Ovary (tissue), 10 donors: ENCODE measurements at regions of chr11 and their contacts with region 1.

Region 1: DNA sequence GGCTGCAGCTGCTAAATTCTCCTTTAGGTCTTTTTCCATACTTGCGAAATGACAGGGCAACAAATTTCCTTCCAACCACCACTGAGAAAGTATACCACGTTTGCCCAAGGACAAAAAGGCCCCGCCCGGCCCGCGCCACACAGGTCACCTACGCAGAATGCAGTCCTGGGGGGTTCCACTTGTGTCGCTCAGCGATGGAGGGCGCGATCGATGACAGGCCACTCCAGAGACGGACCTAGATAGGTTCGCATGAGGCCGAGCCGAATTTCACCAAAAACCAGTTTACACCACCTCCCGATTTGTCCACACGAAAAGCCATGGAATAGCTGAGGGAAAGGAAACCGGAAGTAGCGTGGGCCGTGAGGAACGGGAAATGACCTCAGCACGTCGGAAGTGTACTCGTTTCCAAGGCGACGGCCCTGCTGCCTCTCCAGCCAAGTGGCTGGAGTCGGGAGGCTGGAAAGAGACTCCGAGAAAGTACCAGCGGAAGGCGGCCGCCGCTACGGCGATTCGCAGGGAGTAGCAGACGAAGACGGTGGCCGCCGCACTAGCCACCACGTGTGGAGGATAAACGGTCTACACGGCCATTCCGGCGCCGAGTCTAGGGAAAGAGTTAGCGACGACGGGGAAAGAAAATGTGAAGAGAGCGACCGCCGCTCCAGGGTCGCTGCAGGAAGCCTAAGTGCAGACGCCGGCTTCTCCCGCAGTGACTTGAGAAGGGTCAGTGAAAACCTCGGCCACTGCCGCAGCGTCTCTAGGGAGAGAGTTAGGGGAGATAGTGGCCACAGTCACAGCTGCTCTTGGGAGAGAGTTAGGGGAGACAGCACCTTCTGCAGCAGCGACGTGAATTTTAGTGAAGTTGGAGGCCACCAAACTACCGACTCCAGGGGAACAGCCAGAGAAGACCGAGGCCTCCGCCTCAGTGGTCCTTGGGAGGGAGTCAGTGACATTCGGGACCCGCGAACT is at the start of gene ANKRD42:
- DNase-seq: peak; percentile 90 to 93 (median 92)
- H3K4me3 ChIP-seq: peak within 1 kb of the TSS; percentile 94
- H3K27ac ChIP-seq: peak within 1 kb of the TSS; percentile 70 to 75
- H3K4me1 ChIP-seq: peaks cover 4% of the 10 kb centered on the region
- H3K27me3 ChIP-seq: no peaks in the 10 kb centered on the region
- CTCF ChIP-seq: no peak
- EP300 ChIP-seq: peak; percentile 32
- POLR2A ChIP-seq: peak; percentile 88
- total RNA-seq, gene ANKRD42: 12.4 to 21.7 (median 14.0) TPM

Region 2: DNA sequence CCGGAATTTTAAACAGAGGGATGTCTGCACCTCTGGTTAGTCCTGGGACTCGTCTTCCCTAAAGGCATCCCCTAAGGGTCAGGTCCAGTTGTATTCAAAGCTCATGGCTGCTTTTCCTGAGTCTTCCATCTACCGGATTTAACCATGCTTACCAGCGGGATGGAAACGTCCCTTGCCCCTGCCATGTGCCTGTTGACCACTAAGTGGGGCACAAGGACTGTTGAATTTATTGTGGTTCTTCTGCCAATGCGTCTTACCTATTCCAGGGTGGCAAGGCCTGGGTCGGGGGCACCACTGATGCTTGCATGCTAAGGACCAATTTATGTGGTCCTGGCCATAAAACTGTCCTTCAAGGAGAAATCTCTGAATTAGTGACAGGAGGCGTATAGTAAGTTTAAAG is 25.5 kb after region 1 on chr11:
- intact Hi-C with region 1: no loop called
- DNase-seq: no peak
- H3K4me3 ChIP-seq: no peak overlapping the region
- H3K27ac ChIP-seq: no peak overlapping the region
- H3K4me1 ChIP-seq: no peaks in the 10 kb centered on the region
- H3K27me3 ChIP-seq: no peaks in the 10 kb centered on the region
- CTCF ChIP-seq: no peak
- EP300 ChIP-seq: no peak
- POLR2A ChIP-seq: no peak

Region 3: DNA sequence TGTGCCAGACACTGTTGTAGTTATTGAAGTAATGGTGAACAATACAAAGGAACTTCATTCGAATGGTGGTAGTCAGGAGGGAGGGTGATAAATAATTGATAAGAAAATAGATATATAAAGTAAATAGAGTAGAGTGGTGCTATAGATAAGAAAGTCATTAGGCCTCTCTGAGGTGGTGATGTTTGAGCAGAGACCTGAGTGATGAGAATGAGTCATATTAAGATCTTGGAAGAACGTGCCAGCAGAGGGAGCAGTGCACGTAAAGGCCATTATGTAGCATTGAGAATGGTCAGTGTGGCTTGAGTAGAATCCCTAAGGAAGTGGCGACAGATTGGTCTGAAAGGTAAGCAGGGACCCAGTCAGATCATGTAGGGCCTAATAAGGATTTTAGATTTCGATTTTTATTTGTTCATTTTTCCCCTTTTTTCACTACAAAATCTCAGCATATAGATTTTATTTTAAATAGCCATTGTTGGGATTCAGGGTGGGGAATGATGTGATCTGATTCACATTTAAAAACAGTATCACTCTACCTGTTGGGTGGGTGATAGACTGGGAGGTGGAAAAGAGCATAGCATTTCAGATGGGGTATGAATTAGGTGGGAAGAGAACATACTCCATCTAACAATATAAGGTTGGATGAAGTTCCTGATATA is 47.8 kb after region 1 on chr11:
- intact Hi-C with region 1: loop called in 1 of 4 experiments (anchors 10 kb)
- DNase-seq: peak in 3 of 5 donors; percentile 14 to 49 (median 28)
- H3K4me3 ChIP-seq: no peak overlapping the region
- H3K27ac ChIP-seq: no peak overlapping the region
- H3K4me1 ChIP-seq: no peaks in the 10 kb centered on the region
- H3K27me3 ChIP-seq: no peaks in the 10 kb centered on the region
- CTCF ChIP-seq: peak in 1 of 3 donors; percentile 20
- EP300 ChIP-seq: no peak
- POLR2A ChIP-seq: no peak